Panc1 (cell line): ENCODE measurements at regions of chr12 and their contacts with region 1.

Region 1: DNA sequence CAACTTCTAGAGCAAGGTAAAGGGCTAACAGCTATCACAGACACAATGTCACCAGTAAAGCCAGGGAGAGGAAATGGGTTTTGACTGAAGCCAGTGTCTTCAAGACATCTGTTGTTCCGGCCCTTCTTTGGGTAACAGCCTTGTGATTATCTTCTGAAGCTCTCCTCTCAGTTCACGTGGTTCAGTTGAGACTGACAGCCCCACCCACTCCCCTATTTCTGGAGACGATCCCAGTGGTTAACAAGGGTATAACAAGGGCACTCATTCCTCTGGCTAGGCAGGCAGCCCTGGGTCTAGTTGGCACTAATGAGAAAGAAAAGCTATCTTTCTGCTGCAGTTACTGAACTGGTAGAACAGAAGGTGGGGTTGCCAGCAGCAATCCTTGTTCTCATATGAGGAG is 6.9 kb downstream of the GNPTAB start:
- DNase-seq: no peak
- ATAC-seq: peak; percentile 78
- H3K4me3 ChIP-seq: no peak overlapping the region
- H3K27ac ChIP-seq: no peak overlapping the region
- H3K4me1 ChIP-seq: no peaks in the 10 kb centered on the region
- H3K27me3 ChIP-seq: no peaks in the 10 kb centered on the region
- CTCF ChIP-seq: no peak

Region 2: DNA sequence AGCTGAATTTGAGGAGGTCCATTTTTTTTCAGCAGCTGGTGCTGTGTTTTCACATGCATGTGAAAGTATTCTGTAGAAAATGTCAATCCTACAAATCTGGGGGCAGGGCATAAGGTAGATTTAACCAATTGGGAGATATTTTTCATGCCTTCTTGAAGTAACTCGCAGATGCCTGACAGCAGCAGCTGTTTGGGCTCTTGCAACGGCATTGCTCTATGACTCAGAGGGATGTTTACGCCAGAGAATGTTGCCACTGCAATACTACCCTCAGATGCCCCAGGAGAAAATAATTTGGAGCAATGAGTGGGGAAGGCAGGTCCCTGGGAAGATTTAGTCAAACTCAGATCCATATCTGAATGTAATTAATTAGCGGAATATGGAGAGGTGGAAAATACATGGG is 271.6 kb before region 1 on chr12:
- CTCF ChIA-PET with region 1: no interaction called
- POLR2A ChIA-PET with region 1: no interaction called
- in situ Hi-C with region 1: no loop called
- intact Hi-C with region 1: no loop called
- DNase-seq: no peak
- ATAC-seq: no peak
- H3K4me3 ChIP-seq: no peak overlapping the region
- H3K27ac ChIP-seq: no peak overlapping the region
- H3K4me1 ChIP-seq: no peaks in the 10 kb centered on the region
- H3K27me3 ChIP-seq: no peaks in the 10 kb centered on the region
- CTCF ChIP-seq: no peak

Region 3: GRCh38 chr12:101738920-101739665 is 84.8 kb before region 1 on chr12 and contains the start of gene SYCP3:
- CTCF ChIA-PET with region 1: no interaction called
- POLR2A ChIA-PET with region 1: no interaction called
- in situ Hi-C with region 1: no loop called
- intact Hi-C with region 1: no loop called
- DNase-seq: no peak
- ATAC-seq: no peak
- H3K4me3 ChIP-seq: no peak within 1 kb of the TSS
- H3K27ac ChIP-seq: no peak within 1 kb of the TSS
- H3K4me1 ChIP-seq: no peaks in the 10 kb centered on the region
- H3K27me3 ChIP-seq: no peaks in the 10 kb centered on the region
- CTCF ChIP-seq: no peak
- total RNA-seq, gene SYCP3: not detected

Region 4: DNA sequence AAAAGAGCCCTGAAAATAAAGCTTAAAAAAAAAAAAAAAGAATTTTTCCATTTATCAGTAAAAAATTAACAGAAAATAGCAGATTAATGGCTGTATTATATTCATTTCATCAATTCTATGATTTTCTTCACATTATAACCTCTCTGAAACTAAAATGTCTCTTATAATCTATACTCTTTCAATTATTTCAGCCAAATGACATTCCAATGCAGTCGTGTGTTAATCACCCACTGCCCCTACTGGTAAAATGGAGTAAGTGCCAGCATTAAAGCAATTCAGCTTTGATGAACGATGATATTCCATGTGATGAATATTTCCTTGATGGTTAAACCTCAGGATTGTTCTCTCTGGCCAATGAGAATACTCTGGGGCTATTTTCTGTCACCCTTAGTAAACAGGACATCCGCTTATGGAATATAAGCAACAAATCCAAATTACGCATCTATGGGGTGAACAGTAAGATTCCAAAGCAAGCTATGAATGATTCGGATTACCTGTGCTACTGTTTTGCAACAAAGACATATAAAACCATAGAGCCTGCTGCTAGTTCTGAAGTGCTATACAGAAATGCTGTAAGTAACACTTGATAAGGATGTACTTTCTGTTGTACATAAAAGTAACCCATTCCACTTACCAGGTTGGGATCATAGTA is 64.4 kb before region 1 on chr12:
- CTCF ChIA-PET with region 1: interaction called, 3 read pairs
- POLR2A ChIA-PET with region 1: interaction called, 10 read pairs
- in situ Hi-C with region 1: no loop called
- intact Hi-C with region 1: no loop called
- DNase-seq: no peak
- ATAC-seq: peak; percentile 79
- H3K4me3 ChIP-seq: no peak overlapping the region
- H3K27ac ChIP-seq: no peak overlapping the region
- H3K4me1 ChIP-seq: no peaks in the 10 kb centered on the region
- H3K27me3 ChIP-seq: no peaks in the 10 kb centered on the region
- CTCF ChIP-seq: peak; percentile 84

Region 5: DNA sequence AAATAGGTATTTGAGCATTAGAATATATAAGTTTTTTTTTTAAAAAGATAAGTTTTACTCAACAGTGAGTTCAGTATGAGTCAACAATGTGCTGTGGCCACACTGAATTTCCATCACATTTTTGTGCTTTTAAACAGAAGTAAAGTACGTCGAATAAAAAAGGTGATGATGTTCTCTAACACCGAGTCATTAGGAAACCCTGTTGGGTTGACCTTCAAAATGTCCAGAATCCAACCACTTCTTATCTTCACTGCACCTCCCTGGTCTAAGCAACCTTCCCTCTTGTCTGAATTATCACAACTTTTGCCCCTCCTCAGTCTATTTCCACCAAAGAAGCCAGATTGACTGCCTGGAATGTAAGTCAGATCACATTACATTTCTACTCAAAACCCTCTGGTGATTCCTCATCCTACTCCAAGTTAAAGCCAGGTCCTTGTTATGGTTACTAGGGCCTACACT is 41.6 kb before region 1 on chr12:
- CTCF ChIA-PET with region 1: no interaction called
- POLR2A ChIA-PET with region 1: interaction called, 15 read pairs
- in situ Hi-C with region 1: no loop called
- intact Hi-C with region 1: no loop called
- DNase-seq: no peak
- ATAC-seq: no peak
- H3K4me3 ChIP-seq: no peak overlapping the region
- H3K27ac ChIP-seq: no peak overlapping the region
- H3K4me1 ChIP-seq: no peaks in the 10 kb centered on the region
- H3K27me3 ChIP-seq: no peaks in the 10 kb centered on the region
- CTCF ChIP-seq: no peak

Region 6: DNA sequence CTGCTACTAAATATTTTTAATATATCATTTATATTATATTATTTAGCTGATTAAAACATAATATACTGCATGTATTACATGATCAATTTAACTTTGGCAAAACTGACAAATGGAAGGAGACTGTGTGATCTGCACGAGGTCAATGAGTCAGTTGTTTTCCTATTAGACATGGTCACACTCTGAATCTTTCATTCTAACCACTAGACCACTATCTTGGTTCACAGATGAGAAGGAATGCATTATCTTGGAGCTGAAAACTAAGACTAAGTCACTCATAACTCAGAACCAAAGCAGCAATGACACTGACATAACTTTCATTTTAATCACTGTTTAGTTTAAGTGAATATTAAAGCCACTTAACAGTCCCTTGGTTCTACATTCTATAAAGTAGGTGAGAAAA is 30.5 kb before region 1 on chr12:
- CTCF ChIA-PET with region 1: no interaction called
- POLR2A ChIA-PET with region 1: no interaction called
- in situ Hi-C with region 1: no loop called
- intact Hi-C with region 1: no loop called
- DNase-seq: peak; percentile 33
- ATAC-seq: no peak
- H3K4me3 ChIP-seq: no peak overlapping the region
- H3K27ac ChIP-seq: no peak overlapping the region
- H3K4me1 ChIP-seq: no peaks in the 10 kb centered on the region
- H3K27me3 ChIP-seq: no peaks in the 10 kb centered on the region
- CTCF ChIP-seq: no peak

Region 7: DNA sequence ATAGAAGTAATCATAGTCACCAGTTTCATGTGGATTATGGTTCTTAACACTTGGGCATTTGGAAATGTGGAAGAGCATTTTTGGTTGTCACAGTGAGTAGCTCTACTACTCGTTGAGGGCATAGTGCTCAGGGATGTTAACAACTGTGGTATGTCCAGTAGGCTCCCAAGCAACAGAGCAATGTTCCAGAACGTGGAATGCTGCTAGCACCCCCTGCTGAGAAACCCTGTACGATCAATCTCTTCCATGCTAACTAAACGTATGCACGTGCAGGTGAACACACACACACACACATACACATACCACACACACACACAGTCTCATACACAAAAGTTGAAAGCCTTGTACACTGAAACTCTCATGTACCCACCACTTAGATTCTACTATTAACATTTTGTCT is 23.4 kb after region 1 on chr12:
- CTCF ChIA-PET with region 1: no interaction called
- POLR2A ChIA-PET with region 1: interaction called, 13 read pairs
- in situ Hi-C with region 1: no loop called
- intact Hi-C with region 1: no loop called
- DNase-seq: no peak
- ATAC-seq: no peak
- H3K4me3 ChIP-seq: no peak overlapping the region
- H3K27ac ChIP-seq: no peak overlapping the region
- H3K4me1 ChIP-seq: no peaks in the 10 kb centered on the region
- H3K27me3 ChIP-seq: no peaks in the 10 kb centered on the region
- CTCF ChIP-seq: no peak